Endothelial cell of umbilical vein (primary cell): ENCODE measurements at regions of chr5 and their contacts with region 1.

Region 1: DNA sequence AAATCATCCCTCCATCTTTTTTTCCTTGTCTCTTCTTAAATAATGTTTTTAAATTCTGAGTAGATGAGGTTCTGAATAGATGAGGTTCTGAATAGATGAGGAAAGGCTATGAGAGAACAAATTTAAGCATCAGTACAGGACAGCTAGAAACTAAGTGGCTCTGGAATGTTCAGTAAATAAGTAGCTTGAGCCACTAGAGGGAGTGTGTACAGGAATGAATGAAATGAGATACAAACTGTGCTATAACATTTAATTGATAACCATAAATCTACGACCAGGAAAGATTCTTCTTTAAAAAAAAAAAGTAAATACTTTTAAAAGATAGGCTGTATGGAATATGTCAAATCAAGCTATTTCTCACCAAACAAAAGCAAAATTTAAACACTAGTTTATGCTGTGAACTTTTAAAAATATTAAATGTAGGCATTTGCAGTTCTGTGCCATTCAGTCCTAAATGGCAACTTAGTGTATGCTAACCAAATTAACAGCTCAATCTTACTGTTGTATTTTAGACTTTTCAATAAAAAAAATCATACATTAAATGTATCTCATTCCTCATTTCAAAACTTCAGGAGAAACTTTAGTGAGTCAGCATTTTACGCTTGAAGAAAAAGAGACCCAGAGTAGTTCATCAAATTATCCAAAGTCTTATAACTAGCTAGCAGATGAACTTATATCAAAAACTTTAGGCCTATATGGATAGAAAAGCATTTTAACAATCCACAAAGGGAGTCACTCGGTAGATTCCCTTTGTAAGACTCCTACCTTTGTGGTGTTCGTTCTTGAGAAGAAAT is 70.4 kb upstream of the SNX2 start:
- DNase-seq: peak; percentile 39
- H3K4me3 ChIP-seq: no peak overlapping the region
- H3K27ac ChIP-seq: no peak overlapping the region
- H3K4me1 ChIP-seq: no peaks in the 10 kb centered on the region
- H3K27me3 ChIP-seq: no peaks in the 10 kb centered on the region
- CTCF ChIP-seq: peak; percentile 38 to 50
- POLR2A ChIP-seq: no peak

Region 2: GRCh38 chr5:122649080-122649479 is 55.4 kb before region 1 on chr5:
- CTCF ChIA-PET with region 1: no interaction called
- POLR2A ChIA-PET with region 1: no interaction called
- dilution Hi-C with region 1: no loop called
- intact Hi-C with region 1: no loop called
- DNase-seq: no peak
- H3K4me3 ChIP-seq: no peak overlapping the region
- H3K27ac ChIP-seq: no peak overlapping the region
- H3K4me1 ChIP-seq: no peaks in the 10 kb centered on the region
- H3K27me3 ChIP-seq: no peaks in the 10 kb centered on the region
- CTCF ChIP-seq: no peak
- POLR2A ChIP-seq: no peak

Region 3: DNA sequence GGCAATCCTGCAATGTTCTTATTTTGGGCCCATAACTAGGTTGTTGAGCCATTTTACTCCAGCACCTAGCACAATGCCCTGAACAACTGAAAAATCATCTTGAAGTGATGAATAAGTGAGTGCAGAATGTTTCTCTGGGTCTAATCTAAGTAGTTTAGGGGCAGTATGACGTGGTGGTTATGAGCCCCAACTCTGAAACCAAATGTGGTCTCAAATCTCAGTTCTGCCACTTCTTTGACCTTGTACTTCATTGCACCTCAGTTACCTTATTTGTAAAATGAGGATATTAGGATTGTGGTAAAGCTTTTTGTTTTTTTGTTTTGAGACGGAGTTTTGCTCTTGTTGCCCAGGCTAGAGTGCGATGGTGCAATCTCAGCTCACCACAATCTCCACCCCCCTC is 10.5 kb before region 1 on chr5:
- CTCF ChIA-PET with region 1: interaction called, 19 read pairs
- POLR2A ChIA-PET with region 1: no interaction called
- dilution Hi-C with region 1: no loop called
- intact Hi-C with region 1: no loop called
- DNase-seq: no peak
- H3K4me3 ChIP-seq: no peak overlapping the region
- H3K27ac ChIP-seq: no peak overlapping the region
- H3K4me1 ChIP-seq: no peaks in the 10 kb centered on the region
- H3K27me3 ChIP-seq: no peaks in the 10 kb centered on the region
- CTCF ChIP-seq: no peak
- POLR2A ChIP-seq: no peak

Region 4: GRCh38 chr5:122774861-122775549 is 70.6 kb after region 1 on chr5 and contains the start of gene SNX2:
- CTCF ChIA-PET with region 1: interaction called, 34 read pairs
- POLR2A ChIA-PET with region 1: no interaction called
- dilution Hi-C with region 1: no loop called
- intact Hi-C with region 1: loop called (anchors 1 kb)
- DNase-seq: peak; percentile 89
- H3K4me3 ChIP-seq: peak within 1 kb of the TSS; percentile 84 to 88 (median 86)
- H3K27ac ChIP-seq: peak within 1 kb of the TSS; percentile 44
- H3K4me1 ChIP-seq: peaks cover 18% of the 10 kb centered on the region
- H3K27me3 ChIP-seq: peaks cover 2 to 7% of the 10 kb centered on the region in 2 experiments
- CTCF ChIP-seq: peak in 1 of 2 donors; percentile 18
- POLR2A ChIP-seq: peak; percentile 62
- total RNA-seq, gene SNX2: 46.3 and 51.2 TPM in 2 replicates

Region 5: DNA sequence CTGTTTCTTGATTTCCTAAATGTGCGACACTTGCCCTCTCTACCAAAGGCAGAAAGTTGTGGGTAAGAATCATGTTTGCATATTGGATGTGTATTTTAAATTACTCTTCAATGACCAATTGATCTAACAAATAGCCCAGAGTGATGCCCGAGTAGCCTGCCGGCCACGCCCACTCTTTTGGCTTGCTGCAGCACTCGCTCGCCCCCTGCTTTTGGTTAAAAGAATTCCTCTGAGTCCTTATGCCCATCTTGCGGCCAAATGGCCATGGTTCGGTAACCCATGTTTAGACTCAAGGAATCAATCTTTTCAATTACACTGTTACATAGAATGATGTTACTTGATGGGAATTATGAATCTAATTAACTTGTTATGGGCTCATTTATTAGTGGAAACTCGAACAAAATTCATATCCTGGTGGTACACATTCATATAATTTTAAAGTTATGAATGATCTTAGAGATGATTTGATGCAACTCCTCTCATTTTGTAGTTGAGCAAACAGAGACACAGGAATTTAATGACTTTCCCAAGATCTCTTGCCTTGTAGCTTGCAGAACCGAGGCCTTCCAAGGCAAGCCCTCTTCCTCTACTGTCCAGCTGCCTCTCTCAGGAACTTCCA is 295.6 kb after region 1 on chr5:
- CTCF ChIA-PET with region 1: interaction called, 5 read pairs
- POLR2A ChIA-PET with region 1: no interaction called
- dilution Hi-C with region 1: no loop called
- intact Hi-C with region 1: loop called (anchors 5 kb)
- DNase-seq: peak; percentile 23
- H3K4me3 ChIP-seq: no peak overlapping the region
- H3K27ac ChIP-seq: no peak overlapping the region
- H3K4me1 ChIP-seq: no peaks in the 10 kb centered on the region
- H3K27me3 ChIP-seq: no peaks in the 10 kb centered on the region
- CTCF ChIP-seq: peak; percentile 17 to 31
- POLR2A ChIP-seq: no peak

Region 6: GRCh38 chr5:123344816-123345426 is 640.5 kb after region 1 on chr5:
- CTCF ChIA-PET with region 1: no interaction called
- POLR2A ChIA-PET with region 1: no interaction called
- dilution Hi-C with region 1: no loop called
- intact Hi-C with region 1: loop called (anchors 10 kb)
- DNase-seq: peak; percentile 45
- H3K4me3 ChIP-seq: no peak overlapping the region
- H3K27ac ChIP-seq: no peak overlapping the region
- H3K4me1 ChIP-seq: no peaks in the 10 kb centered on the region
- H3K27me3 ChIP-seq: no peaks in the 10 kb centered on the region
- CTCF ChIP-seq: peak; percentile 34 to 55
- POLR2A ChIP-seq: no peak

Region 7: DNA sequence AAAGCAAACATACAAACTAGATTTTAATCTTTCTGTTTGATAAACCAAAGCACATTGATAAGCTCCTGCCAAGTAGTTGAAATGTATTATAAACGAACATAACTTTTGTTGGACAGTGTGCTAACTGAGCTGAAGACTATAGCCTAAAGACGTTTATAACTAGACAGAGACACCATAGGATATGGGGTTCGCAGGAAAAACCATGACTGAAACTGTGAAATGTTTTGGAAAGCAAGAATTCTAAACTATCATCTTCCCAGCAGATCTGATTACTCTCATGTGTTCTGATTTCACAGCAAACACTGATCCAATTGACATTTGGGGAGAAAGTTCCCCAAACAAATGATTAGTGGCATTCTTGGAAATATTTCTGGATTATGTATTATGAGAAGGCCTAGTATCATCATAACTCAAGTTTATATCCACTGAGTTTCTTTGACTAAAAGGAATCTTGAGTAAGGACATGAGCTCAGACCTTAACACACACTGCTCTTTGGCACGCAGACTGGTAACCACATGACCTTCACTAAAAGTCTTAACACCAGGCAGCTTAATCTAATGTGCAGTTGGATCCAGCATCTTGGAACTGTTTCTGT is 1666.8 kb after region 1 on chr5:
- CTCF ChIA-PET with region 1: no interaction called
- POLR2A ChIA-PET with region 1: no interaction called
- dilution Hi-C with region 1: no loop called
- intact Hi-C with region 1: no loop called
- DNase-seq: no peak
- H3K4me3 ChIP-seq: no peak overlapping the region
- H3K27ac ChIP-seq: no peak overlapping the region
- H3K4me1 ChIP-seq: no peaks in the 10 kb centered on the region
- H3K27me3 ChIP-seq: no peaks in the 10 kb centered on the region
- CTCF ChIP-seq: no peak
- POLR2A ChIP-seq: no peak